PC-9 (cell line): ENCODE measurements at regions of chr4 and their contacts with region 1.

Region 1: GRCh38 chr4:169164669-169165415 is 105.9 kb downstream of the SH3RF1 start:
- DNase-seq: no peak
- H3K4me3 ChIP-seq: no peak overlapping the region
- H3K27ac ChIP-seq: no peak overlapping the region
- H3K4me1 ChIP-seq: peaks cover 6% of the 10 kb centered on the region
- H3K27me3 ChIP-seq: no peaks in the 10 kb centered on the region
- CTCF ChIP-seq: no peak

Region 2: GRCh38 chr4:169506903-169507302 is 342.1 kb after region 1 on chr4:
- CTCF ChIA-PET with region 1: interaction called, 13 read pairs
- POLR2A ChIA-PET with region 1: no interaction called
- intact Hi-C with region 1: no loop called
- DNase-seq: no peak
- H3K4me3 ChIP-seq: no peak overlapping the region
- H3K27ac ChIP-seq: no peak overlapping the region
- H3K4me1 ChIP-seq: no peaks in the 10 kb centered on the region
- H3K27me3 ChIP-seq: no peaks in the 10 kb centered on the region
- CTCF ChIP-seq: no peak